CD4-positive, alpha-beta T cell (primary cell): ENCODE measurements at regions of chr1 and their contacts with region 1.

Region 1: DNA sequence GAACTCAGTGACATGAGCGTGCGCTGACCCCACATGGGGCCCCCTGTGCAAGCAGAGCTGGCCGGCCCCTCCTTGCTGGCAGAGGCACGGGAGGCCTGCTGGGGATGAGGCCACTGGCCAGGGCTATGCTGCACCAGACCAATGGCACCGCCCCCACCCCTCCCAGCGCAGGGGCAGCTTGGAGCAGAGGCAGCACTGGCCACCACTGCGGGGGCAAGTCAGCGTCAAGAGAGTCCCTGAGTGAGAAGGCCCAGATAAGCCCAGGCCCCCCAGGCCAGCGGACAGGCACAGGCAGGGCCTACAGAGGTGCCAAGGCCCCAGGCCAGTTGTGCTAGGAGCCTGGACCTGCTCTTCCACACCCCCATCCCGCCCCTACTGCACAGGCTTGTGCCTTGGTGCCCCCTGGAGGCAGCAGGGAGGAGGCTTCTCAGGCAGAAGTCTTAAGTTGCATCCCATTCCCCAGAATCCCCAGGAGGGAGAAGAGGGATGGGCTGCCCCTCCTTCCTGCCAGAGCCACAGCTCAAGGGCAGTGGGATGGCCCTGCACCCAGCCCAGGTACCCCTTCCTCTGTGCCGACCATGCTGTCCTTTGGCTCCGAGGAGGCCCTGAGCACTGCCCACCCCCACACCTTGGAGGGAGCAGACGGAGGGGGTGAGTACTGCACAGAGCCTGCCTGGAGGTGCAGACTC is 35.8 kb downstream of the EPHX1 start:
- DNase-seq: peak in 8 of 14 experiments; percentile 16 to 66 (median 35)
- ATAC-seq: no peak
- H3K4me3 ChIP-seq: no peak overlapping the region
- H3K4me3 Mint-ChIP-seq: no peak overlapping the region
- H3K27ac ChIP-seq: no peak overlapping the region
- H3K27ac Mint-ChIP-seq: peak overlapping the region; percentile 96
- H3K4me1 ChIP-seq: peaks cover 40% of the 10 kb centered on the region
- H3K4me1 Mint-ChIP-seq: peaks cover 58% of the 10 kb centered on the region
- H3K27me3 ChIP-seq: no peaks in the 10 kb centered on the region
- H3K27me3 Mint-ChIP-seq: no peaks in the 10 kb centered on the region
- CTCF ChIP-seq: peak; percentile 35

Region 2: DNA sequence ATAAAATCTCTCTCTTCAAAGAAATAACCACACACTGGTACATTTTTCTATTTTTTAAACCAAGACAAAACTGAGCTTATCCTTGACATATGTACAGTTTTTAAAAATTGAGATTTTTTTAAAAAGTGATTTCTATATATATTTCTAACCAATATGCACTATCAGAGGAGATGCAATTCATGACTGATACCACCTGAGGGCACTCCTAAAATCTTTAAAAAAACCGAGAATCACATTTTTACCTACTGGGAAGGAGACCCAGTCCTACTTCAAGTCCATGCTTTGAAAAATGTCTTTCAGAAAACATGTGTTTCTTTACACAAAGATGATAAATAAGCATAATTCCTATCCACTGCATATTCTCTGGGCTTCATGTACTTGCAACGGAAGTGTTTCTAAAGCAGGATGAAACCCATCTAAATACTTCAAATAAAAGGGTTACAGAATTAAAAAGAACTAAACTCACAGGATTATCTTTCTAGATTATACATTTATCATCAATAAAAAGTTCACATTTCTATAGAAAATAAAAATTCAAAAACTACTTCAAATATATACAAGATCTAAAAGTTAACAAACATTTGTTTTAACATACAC is 291.4 kb before region 1 on chr1:
- CTCF ChIA-PET with region 1: no interaction called
- POLR2A ChIA-PET with region 1: no interaction called
- intact Hi-C with region 1: loop called in 1 of 2 experiments (anchors 10 kb)
- DNase-seq: peak in 3 of 14 experiments; percentile 30 to 44 (median 34)
- ATAC-seq: no peak
- H3K4me3 ChIP-seq: no peak overlapping the region
- H3K4me3 Mint-ChIP-seq: no peak overlapping the region
- H3K27ac ChIP-seq: no peak overlapping the region
- H3K27ac Mint-ChIP-seq: no peak overlapping the region
- H3K4me1 ChIP-seq: no peaks in the 10 kb centered on the region
- H3K4me1 Mint-ChIP-seq: no peaks in the 10 kb centered on the region
- H3K27me3 ChIP-seq: peaks cover 0 to under 1% of the 10 kb centered on the region in 2 experiments
- H3K27me3 Mint-ChIP-seq: peaks cover 4% of the 10 kb centered on the region
- CTCF ChIP-seq: peak; percentile 67

Region 3: GRCh38 chr1:225772323-225772768 is 73.4 kb before region 1 on chr1:
- CTCF ChIA-PET with region 1: no interaction called
- POLR2A ChIA-PET with region 1: interaction called, 23 read pairs
- intact Hi-C with region 1: loop called in 1 of 2 experiments (anchors 5 kb)
- DNase-seq: peak in 4 of 14 experiments; percentile 20 to 54 (median 40)
- ATAC-seq: no peak
- H3K4me3 ChIP-seq: no peak overlapping the region
- H3K4me3 Mint-ChIP-seq: no peak overlapping the region
- H3K27ac ChIP-seq: no peak overlapping the region
- H3K27ac Mint-ChIP-seq: no peak overlapping the region
- H3K4me1 ChIP-seq: peaks cover 18% of the 10 kb centered on the region
- H3K4me1 Mint-ChIP-seq: no peaks in the 10 kb centered on the region
- H3K27me3 ChIP-seq: no peaks in the 10 kb centered on the region
- H3K27me3 Mint-ChIP-seq: no peaks in the 10 kb centered on the region
- CTCF ChIP-seq: peak; percentile 17